ENCODE measurements at regions of chr14 and their contacts with region 1.

Region 1: DNA sequence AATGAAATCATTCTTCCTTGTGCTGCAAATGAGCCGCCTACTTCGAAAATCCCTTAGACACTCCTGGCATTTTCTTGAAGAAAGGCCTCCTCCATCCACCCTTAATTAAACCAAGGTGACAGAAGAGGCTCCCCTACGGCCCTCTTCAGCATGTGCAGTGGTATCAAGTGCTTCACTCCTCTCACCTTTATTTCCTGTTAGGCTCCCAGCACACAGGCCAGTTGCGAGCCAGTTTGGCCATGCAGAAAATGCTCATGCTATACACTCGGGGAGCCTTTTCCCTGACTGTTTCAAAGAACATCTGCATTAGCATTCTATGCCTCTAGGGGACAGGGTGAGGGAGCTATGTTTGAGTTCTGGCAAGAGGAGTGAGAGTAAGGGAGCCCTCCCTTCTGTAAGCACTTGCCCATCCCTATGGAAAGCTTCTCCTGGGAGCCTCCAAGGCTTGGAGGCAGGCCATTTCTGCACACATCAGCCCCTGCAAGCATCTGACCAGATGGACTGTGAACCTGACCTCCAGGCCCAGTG is 291.5 kb downstream of the RPS29 start:
- DNase-seq: no peak
- H3K4me3 ChIP-seq: no peak overlapping the region
- H3K27ac ChIP-seq: no peak overlapping the region
- H3K4me1 ChIP-seq: no peaks in the 10 kb centered on the region
- H3K27me3 ChIP-seq: no peaks in the 10 kb centered on the region
- CTCF ChIP-seq: peak in 2 of 3 experiments; percentile 22 to 39; a peak in 2 of 4 replicates
- EP300 ChIP-seq: no peak
- POLR2A ChIP-seq: no peak
- RAD21 ChIP-seq: peak in 1 of 2 experiments; percentile 40; a peak in 2 of 4 replicates

Region 2: DNA sequence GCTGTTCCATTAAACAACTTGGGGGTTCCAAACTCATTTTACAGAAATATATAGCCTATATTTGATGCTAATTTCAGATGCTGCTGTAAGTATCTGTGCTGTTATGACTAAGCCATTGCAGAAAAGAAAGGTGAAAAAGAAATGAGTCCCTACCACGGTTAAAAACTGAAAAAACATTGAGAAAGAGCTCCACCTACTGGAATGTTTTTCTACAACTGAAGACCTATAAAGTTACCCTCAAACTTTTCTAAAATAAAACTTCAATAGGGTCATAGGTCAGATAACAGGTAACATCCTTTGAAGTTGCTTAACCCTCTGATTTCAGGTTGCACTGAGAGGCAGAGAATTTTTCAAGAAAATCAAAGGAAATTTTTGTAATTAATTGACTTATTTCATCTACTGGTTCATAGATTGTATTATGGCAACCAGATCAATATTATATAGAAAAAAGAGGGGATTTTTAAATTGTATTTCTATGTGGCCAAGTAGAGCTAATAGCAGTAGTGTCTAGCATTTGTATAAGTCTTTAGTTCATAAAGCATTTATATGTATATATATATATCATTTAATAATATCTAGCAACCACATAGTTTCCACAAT is 11.6 kb after region 1 on chr14:
- CTCF ChIA-PET with region 1: interaction called, 40 read pairs
- POLR2A ChIA-PET with region 1: no interaction called
- DNase-seq: no peak
- H3K4me3 ChIP-seq: no peak overlapping the region
- H3K27ac ChIP-seq: no peak overlapping the region
- H3K4me1 ChIP-seq: peaks cover 0 to 2% (median 0%) of the 10 kb centered on the region in 4 experiments; a peak in 1 of 7 replicates
- H3K27me3 ChIP-seq: no peaks in the 10 kb centered on the region
- CTCF ChIP-seq: peak in 2 of 3 experiments; percentile 31; a peak in 2 of 4 replicates
- EP300 ChIP-seq: no peak
- POLR2A ChIP-seq: no peak
- RAD21 ChIP-seq: peak; percentile 60 to 65

Measured in H1 (cell line).